Esophagus muscularis mucosa (tissue), 4 donors: ENCODE measurements at regions of chr22 and their contacts with region 1.

Region 1: DNA sequence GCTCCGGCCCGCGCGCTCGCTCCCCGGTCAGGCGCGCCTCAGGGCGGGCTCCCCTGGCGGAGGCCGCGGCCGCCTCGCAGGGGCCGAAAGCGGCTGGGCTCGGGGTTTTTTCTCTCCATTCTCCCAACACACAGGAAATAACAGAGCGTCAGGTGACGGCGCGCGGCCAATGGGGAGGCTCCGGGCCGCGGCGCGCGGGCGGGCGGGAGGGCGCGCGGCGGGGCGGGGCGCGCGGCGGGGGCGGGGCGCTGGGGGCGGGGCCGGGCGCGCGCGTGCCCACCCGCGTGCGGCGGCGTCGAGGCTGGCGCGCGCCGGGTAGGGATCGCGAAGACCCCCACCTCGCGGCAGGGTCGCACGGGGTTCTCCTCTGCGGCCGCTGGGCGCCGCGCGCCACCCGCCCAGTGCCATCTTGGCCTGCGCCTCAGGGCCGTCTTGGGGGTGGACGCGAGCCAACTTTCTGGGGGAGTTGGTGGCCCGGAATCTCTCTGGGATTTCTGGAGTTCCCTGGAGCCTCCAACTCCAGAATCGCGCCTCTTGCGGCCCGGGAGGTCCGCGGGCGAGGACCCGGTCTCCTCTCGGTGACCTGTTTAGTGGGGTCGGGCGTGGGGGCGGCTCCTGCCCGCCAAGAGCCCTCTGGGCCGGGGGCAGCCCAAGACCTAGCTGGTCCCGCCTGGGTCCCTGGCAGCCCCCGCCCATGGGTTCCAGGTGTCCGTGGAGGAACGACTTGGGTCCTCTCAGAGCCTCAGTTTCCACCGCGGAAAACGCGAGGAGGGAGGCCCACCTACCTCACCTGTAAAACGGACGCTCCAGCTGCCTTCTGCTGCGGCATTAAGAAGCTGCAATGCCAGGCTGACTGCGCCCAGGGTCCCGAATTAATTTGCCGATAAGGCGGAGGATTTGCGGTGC is at the start of gene TCF20:
- DNase-seq: no peak
- H3K4me3 ChIP-seq: peak within 1 kb of the TSS; percentile 93 to 100 (median 98)
- H3K27ac ChIP-seq: peak within 1 kb of the TSS; percentile 82 to 93 (median 88)
- H3K4me1 ChIP-seq: peaks cover 12 to 30% (median 24%) of the 10 kb centered on the region in 4 donors
- H3K27me3 ChIP-seq: no peaks in the 10 kb centered on the region
- CTCF ChIP-seq: no peak
- EP300 ChIP-seq: no peak
- POLR2A ChIP-seq: no peak
- total RNA-seq, gene TCF20: 24.9 to 48.2 (median 38.4) TPM

Region 2: DNA sequence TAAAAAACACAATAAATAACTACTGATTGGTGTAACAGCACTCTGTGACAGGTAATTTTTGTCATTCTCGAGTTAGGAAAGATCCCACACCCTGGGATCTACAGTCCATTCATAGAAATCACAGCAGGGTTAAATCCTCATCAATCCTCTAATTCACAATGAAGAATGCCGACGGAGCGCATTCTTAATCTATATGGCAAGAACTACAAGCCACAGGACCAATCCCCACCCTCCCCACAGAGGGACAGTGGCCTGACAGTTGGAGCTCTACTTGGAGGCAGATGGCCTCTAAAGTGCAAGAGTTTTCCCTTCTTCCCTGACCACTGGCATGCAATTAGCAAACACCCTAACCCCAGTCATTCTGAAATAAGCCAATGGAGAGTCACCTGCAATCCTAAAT is 34.5 kb before region 1 on chr22:
- intact Hi-C with region 1: no loop called
- DNase-seq: no peak
- H3K4me3 ChIP-seq: no peak overlapping the region
- H3K27ac ChIP-seq: no peak overlapping the region
- H3K4me1 ChIP-seq: peaks cover 0 to 6% (median 0%) of the 10 kb centered on the region in 4 donors
- H3K27me3 ChIP-seq: no peaks in the 10 kb centered on the region
- CTCF ChIP-seq: no peak
- EP300 ChIP-seq: no peak
- POLR2A ChIP-seq: no peak

Region 3: DNA sequence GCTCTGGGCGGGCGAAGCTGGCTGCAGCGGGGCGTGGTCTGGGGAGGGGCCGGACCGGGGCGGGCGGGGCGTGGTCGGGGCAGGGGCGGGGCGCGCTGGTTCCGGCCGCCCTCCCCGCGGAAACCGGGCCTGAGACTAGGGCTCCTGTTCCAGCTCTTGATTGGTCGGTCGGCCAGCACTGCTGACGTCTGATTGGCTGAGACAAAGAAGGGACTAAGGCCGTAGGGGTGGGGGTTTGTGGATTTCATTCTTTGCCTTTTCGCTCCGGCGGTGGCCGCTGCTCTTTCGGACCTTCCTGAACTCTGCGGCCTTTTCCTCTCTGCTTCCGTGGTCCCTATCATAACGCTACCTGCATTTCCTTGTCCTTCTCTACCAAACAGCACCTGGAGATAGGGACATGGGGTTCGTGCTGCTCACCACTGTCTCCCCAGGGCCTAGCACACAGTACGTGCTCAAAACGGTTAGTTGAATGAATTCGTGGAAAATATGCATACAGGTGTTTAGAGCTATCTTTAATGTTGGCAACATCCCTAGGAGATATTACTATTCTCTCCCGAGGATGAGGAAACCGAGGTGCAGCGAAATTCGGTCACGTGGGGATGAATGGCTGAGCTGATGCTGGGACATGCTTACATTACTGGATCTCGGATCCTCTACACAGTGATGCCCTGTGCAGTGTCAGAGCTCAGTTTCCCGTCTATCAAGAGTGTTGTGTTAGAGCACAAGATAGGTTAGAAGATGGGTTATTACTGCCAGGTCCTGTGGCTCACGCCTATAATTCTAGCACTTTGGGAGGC is 98.7 kb after region 1 on chr22:
- intact Hi-C with region 1: loop called (anchors 5 kb)
- DNase-seq: peak; percentile 97
- H3K4me3 ChIP-seq: peak overlapping the region; percentile 64 to 71 (median 70)
- H3K27ac ChIP-seq: peak overlapping the region; percentile 36 to 76 (median 58)
- H3K4me1 ChIP-seq: peaks cover 44 to 54% (median 52%) of the 10 kb centered on the region in 4 donors
- H3K27me3 ChIP-seq: peaks cover 0 to 4% (median 0%) of the 10 kb centered on the region in 4 donors
- CTCF ChIP-seq: no peak
- EP300 ChIP-seq: no peak
- POLR2A ChIP-seq: no peak

Region 4: GRCh38 chr22:42444077-42444904 is 173.5 kb after region 1 on chr22:
- intact Hi-C with region 1: loop called (anchors 5 kb)
- DNase-seq: peak; percentile 94
- H3K4me3 ChIP-seq: peak overlapping the region; percentile 49 to 60 (median 50)
- H3K27ac ChIP-seq: peak overlapping the region; percentile 70 to 86 (median 80)
- H3K4me1 ChIP-seq: peaks cover 24 to 35% (median 34%) of the 10 kb centered on the region in 4 donors
- H3K27me3 ChIP-seq: no peaks in the 10 kb centered on the region
- CTCF ChIP-seq: peak; percentile 49 to 70 (median 52)
- EP300 ChIP-seq: no peak
- POLR2A ChIP-seq: no peak